Tibial artery (tissue), 4 donors: ENCODE measurements at regions of chr16 and their contacts with region 1.

Region 1: DNA sequence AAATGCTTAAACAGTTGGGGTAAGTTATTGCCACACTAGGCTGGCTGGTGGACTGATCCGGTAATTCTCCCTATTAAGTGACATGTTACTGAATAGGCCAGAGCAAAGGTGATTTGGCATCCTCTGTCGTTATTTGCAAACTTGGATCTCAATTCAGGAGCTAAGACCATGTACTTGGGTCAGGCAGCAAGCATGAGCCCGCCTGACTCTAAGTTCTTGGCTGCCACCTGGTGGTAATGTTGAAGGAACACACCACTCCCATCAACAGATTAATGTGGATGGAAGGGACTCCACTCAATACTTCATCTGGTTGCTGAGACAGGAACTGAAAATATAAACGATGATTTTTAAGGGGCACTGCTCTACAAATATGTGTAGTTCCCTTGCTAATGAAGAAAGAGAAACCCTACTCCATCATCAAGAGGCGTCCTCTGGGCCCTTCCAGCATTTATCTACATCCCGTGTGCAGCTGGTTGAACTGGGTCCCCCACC is 70.8 kb downstream of the EMP2 start:
- DNase-seq: peak in 1 of 2 donors; percentile 47
- H3K4me3 ChIP-seq: no peak overlapping the region
- H3K27ac ChIP-seq: no peak overlapping the region
- H3K4me1 ChIP-seq: peaks cover 0 to 7% (median 6%) of the 10 kb centered on the region in 4 donors
- H3K27me3 ChIP-seq: no peaks in the 10 kb centered on the region
- CTCF ChIP-seq: peak; percentile 75 to 81

Region 2: DNA sequence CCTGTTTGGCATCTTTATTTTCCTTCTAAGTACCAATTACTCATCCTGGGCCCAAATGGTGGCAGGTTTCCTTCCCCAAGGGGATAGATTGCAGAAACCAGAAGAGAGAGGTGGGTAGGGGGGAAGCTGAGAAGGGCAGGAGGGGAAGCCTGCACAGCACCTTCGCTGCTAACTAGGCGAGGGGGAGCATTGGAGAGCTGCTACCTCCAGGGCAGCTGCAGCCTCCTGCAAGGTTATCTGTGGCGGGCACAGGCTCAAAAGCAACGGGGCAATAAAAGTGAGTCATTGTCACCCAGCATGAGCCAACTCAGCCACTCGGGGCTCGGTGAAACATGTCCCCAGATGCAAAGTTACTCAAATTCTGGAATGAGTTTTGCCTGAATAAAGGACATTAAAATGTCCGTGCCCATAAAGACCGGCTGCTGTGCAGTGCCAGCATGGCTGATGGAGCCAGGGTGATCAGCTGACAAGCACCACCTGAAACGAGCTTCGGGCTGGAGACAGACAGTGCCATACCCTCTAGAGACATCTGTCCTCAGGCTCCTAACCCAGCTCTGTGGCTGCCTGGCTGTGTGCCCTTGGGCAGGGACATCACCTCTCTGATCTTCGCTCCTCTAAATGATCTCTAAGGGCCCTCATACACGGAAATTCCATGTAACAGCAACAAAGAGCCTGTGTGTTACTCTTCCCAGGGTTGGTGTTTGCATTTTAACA is 259.3 kb before region 1 on chr16:
- intact Hi-C with region 1: loop called (anchors 5 kb)
- DNase-seq: no peak
- H3K4me3 ChIP-seq: no peak overlapping the region
- H3K27ac ChIP-seq: no peak overlapping the region
- H3K4me1 ChIP-seq: peaks cover 0 to under 1% (median 0%) of the 10 kb centered on the region in 4 donors
- H3K27me3 ChIP-seq: peaks cover 0 to 33% of the 10 kb centered on the region in 2 donors
- CTCF ChIP-seq: no peak

Region 3: GRCh38 chr16:10314811-10315210 is 194.8 kb before region 1 on chr16:
- intact Hi-C with region 1: loop called (anchors 10 kb)
- DNase-seq: no peak
- H3K4me3 ChIP-seq: no peak overlapping the region
- H3K27ac ChIP-seq: no peak overlapping the region
- H3K4me1 ChIP-seq: no peaks in the 10 kb centered on the region
- H3K27me3 ChIP-seq: no peaks in the 10 kb centered on the region
- CTCF ChIP-seq: no peak

Region 4: DNA sequence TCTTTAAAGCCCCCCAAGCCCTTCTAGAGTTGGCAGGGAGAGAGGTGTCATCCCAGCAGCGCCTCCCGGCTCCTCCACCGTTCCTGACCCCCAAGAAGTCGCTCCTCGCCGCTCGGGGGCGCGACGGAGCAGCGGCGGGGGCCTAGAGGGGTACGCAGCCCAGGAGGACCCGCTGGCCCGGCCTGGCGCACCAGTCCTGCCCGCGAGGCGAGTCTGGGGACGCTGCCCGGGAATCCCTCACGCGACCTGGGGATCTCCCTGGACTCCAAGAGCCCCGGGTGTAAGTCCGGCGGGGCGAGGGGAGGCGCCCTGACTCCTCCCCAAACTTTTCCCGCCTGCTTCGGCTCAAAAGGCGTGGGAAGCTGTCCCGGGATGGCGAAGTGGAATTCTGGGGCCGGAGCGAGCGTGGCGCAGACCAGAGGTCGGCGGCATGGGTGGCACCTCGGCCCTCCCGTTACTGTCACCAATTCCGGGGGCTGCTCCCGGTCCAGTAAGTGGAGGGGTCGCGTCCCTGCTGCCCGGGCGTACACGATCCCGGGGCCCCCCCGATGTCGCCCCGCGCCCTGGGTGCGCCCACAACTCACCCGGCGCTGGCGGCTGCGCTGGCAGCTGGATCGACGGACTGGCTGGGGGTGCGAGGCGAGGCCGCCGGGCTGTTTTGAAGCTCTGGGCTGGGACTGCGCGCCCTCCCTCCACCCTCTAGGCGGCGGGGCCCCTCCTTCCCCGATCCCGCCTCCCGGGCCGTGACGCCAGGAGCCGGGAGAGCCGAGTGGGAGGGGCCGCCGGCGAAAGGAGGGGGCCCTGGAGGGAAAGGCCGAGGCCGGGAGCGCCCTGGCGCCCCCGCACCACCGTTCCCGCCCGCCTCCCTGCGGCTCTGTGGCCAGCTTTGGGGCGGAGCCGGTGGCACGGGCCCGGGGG is 70.6 kb after region 1 on chr16 and contains the start of gene EMP2:
- intact Hi-C with region 1: no loop called
- DNase-seq: peak; percentile 78 to 94
- H3K4me3 ChIP-seq: peak within 1 kb of the TSS; percentile 94 to 99
- H3K27ac ChIP-seq: peak within 1 kb of the TSS; percentile 97
- H3K4me1 ChIP-seq: peaks cover 0 to 52% (median 32%) of the 10 kb centered on the region in 4 donors
- H3K27me3 ChIP-seq: no peaks in the 10 kb centered on the region
- CTCF ChIP-seq: peak; percentile 52 to 66

Region 5: GRCh38 chr16:10737068-10737625 is 227.6 kb after region 1 on chr16:
- intact Hi-C with region 1: loop called (anchors 2 kb)
- DNase-seq: peak in 1 of 2 donors; percentile 64
- H3K4me3 ChIP-seq: no peak overlapping the region
- H3K27ac ChIP-seq: peak overlapping the region; percentile 58 to 75
- H3K4me1 ChIP-seq: peaks cover 0 to 31% (median 16%) of the 10 kb centered on the region in 4 donors
- H3K27me3 ChIP-seq: no peaks in the 10 kb centered on the region
- CTCF ChIP-seq: peak; percentile 90 to 97